Left ventricle myocardium superior (tissue), 1 donor: ENCODE measurements at regions of chr3 and their contacts with region 1.

Region 1: GRCh38 chr3:126259411-126260391 is 79.3 kb upstream of the ALDH1L1 start:
- DNase-seq: peak; percentile 84
- ATAC-seq: peak; percentile 91

Region 2: GRCh38 chr3:126365351-126366277 is 105.9 kb after region 1 on chr3:
- intact Hi-C with region 1: loop called (anchors 10 kb)
- DNase-seq: no peak
- ATAC-seq: peak; percentile 74

Region 3: DNA sequence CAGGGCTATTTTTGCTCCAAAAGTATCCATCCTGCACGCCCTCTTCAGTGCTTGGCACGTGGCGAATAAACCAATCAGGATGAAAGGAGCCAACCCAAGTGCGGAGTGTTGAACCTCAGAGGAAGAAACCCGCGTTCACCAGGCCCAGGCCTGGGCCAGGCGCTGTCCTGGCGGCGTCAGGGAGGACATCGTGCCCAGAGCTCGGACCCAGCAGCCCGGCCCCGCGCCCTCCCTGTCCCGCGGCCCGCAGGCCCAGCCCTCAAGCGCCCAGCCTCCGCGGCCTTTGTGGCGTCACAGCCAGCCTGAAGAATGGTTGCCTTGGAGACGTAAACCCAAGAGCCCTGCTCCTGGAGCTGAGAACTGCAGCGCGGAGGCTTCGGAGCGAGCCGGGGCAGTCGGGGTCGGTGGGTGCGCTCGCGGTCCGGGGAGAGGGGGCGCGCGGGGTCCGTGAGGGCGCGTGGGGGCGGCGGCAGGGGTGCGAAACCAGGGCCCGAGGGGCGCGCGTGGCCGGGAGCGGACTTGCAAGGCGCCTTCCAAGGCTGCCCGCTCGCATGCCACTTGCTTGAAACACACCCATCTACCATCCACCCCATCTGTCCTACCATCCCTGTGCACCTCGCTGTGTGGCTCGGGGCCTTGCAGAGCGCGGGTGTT is 135.0 kb after region 1 on chr3 and contains the start of gene CFAP100:
- intact Hi-C with region 1: loop called (anchors 5 kb)
- DNase-seq: peak; percentile 61
- ATAC-seq: peak; percentile 75
- total RNA-seq, gene CFAP100: not detected